ENCODE measurements at regions of chr9 and their contacts with region 1.

Region 1: DNA sequence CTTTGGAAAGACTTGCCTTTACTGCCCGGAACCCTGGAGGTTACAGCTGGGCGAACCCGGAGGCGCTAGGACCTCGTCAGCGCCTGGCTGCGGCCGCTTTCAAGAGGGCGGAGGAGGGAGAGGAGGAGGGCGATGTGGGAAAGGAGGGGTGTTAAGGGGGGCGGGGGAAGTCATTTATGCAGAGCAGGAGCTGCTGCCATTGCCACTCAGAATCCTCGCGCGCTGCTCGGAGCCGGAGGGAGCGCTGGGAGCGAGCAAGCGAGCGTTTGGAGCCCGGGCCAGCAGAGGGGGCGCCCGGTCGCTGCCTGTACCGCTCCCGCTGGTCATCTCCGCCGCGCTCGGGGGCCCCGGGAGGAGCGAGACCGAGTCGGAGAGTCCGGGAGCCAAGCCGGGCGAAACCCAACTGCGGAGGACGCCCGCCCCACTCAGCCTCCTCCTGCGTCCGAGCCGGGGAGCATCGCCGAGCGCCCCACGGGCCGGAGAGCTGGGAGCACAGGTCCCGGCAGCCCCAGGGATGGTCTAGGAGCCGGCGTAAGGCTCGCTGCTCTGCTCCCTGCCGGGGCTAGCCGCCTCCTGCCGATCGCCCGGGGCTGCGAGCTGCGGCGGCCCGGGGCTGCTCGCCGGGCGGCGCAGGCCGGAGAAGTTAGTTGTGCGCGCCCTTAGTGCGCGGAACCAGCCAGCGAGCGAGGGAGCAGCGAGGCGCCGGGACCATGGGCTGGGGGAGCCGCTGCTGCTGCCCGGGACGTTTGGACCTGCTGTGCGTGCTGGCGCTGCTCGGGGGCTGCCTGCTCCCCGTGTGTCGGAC is at the start of gene PCSK5:
- DNase-seq: peak; percentile 97
- total RNA-seq, gene PCSK5: 67.9 to 84.2 TPM

Region 2: DNA sequence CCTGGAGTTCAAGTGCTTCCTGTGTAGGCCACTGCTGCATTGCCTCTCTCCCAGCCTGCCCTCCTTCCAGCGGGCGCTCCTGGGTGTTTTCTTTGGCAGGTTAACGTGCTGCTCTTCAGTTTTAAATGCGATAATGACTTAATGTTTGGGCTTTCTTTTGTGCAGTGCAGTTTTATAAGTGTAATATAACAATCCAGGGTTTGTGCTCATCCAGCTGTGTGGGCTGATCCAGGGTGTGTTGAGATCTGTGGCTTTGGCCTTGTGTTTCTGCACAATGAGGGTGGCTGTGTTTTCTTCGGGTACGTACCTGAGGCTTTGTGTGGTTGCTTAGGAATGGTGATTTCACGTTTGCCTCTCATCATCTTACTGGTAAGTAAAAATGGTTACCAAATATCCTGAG is 50.4 kb after region 1 on chr9:
- intact Hi-C with region 1: loop called in 1 of 2 experiments (anchors 10 kb)
- DNase-seq: no peak

Region 3: DNA sequence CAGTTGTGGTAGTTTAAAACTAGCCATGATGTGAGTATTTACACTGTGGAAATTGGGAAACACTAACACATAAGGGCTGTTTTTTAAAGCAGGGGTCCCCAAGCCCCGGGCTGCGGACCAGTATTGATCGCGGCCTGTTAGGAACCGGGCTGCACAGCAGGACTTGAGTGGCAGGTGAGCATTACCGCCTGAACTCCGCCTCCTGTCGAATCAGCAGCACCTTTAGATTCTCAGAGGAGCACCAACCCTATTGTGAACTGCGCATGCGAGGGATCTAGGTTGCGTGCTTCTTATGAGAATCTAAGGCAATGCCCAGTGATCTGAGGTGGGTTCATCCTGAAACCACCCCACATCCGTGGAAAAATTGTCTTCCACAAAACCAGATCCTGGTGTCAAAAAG is 127.6 kb after region 1 on chr9:
- intact Hi-C with region 1: loop called in 1 of 2 experiments (anchors 10 kb)
- DNase-seq: no peak

Region 4: GRCh38 chr9:76297721-76298239 is 407.1 kb after region 1 on chr9:
- intact Hi-C with region 1: loop called in 1 of 2 experiments (anchors 10 kb)
- DNase-seq: peak; percentile 85

Region 5: DNA sequence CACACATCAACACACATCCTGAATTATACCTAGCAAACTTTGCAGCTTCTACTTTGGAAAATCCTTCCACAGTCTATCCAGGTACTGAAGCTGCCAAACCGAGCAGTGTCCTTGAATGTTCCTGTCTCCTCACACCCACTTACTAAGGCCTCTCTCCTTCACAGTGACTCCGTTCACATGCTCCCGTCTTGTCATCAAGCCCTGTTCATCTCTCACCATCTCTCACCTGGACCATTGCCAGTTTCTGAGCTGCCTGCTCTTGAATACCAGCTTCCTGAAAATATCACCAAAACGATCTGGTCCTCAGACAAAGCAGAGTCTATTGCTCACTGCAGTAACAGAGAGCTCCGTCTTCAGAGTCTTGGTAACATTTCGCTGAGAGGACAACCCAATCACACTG is 625.7 kb after region 1 on chr9:
- intact Hi-C with region 1: loop called in 1 of 2 experiments (anchors 10 kb)
- DNase-seq: no peak

Measured in posterior vena cava (tissue), 2 donors.